Naive thymus-derived CD8-positive, alpha-beta T cell (primary cell): ENCODE measurements at regions of chr1 and their contacts with region 1.

Region 1: DNA sequence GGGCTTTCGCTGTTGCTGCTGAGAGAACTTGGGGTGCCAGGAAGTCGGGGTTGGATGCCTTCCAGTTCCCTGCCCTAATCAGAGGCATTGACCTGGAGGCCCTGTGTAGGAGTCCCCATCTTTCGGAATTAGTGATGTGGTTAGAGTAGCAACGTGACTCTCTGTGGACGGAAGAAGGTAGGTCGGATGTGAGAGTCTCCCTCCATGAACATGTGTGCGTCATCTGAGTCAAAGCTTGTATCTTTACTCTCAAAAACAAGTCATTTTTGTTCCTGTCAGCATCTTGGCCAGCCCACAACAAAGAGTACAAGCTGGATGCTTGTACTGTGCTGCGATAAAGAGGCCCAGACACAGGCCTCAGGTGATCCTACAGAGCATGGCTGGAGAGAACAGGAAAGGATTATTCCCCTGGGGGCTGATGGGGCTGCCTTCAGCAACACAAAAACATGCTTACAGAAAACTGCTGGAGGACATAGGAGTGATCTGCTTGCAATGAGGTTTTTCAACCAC is 31.0 kb upstream of the IL10 start:
- DNase-seq: peak; percentile 45 to 94 (median 86)
- ATAC-seq: peak; percentile 93 to 95
- H3K4me3 Mint-ChIP-seq: peak overlapping the region; percentile 4 to 68 (median 61)
- H3K27ac Mint-ChIP-seq: peak overlapping the region; percentile 80 to 98 (median 97)
- H3K4me1 Mint-ChIP-seq: peaks cover 35 to 72% (median 65%) of the 10 kb centered on the region in 4 donors
- H3K27me3 Mint-ChIP-seq: no peaks in the 10 kb centered on the region

Region 2: GRCh38 chr1:206684478-206685333 is 118.6 kb before region 1 on chr1 and contains the start of gene MAPKAPK2:
- POLR2A ChIA-PET with region 1: no interaction called
- DNase-seq: peak; percentile 52 to 83 (median 74)
- ATAC-seq: peak; percentile 70 to 77
- H3K4me3 Mint-ChIP-seq: peak within 1 kb of the TSS; percentile 83 to 100 (median 96)
- H3K27ac Mint-ChIP-seq: peak within 1 kb of the TSS; percentile 88 to 98 (median 96)
- H3K4me1 Mint-ChIP-seq: peaks cover 19 to 69% (median 43%) of the 10 kb centered on the region in 4 donors
- H3K27me3 Mint-ChIP-seq: peaks cover 0 to 2% (median 0%) of the 10 kb centered on the region in 5 donors
- polyA plus RNA-seq, gene MAPKAPK2: 1.3 to 2.5 (median 1.6) TPM

Region 3: GRCh38 chr1:206706298-206706791 is 96.9 kb before region 1 on chr1:
- POLR2A ChIA-PET with region 1: no interaction called
- DNase-seq: no peak
- ATAC-seq: no peak
- H3K4me3 Mint-ChIP-seq: peak overlapping the region in 2 of 10 donors; percentile 35 to 70
- H3K27ac Mint-ChIP-seq: peak overlapping the region in 4 of 10 donors; percentile 7 to 41 (median 22)
- H3K4me1 Mint-ChIP-seq: peaks cover 62 to 90% (median 88%) of the 10 kb centered on the region in 4 donors
- H3K27me3 Mint-ChIP-seq: no peaks in the 10 kb centered on the region

Region 4: GRCh38 chr1:206766251-206766856 is 36.9 kb before region 1 on chr1:
- POLR2A ChIA-PET with region 1: interaction called, 59 read pairs
- DNase-seq: peak; percentile 50 to 82 (median 66)
- ATAC-seq: peak; percentile 84 to 88
- H3K4me3 Mint-ChIP-seq: peak overlapping the region; percentile 46 to 86 (median 78)
- H3K27ac Mint-ChIP-seq: peak overlapping the region; percentile 36 to 94 (median 80)
- H3K4me1 Mint-ChIP-seq: peaks cover 34 to 69% (median 62%) of the 10 kb centered on the region in 4 donors
- H3K27me3 Mint-ChIP-seq: peaks cover 0 to 3% (median 0%) of the 10 kb centered on the region in 5 donors